BJ (cell line): ENCODE measurements at regions of chr17 and their contacts with region 1.

Region 1: GRCh38 chr17:9792181-9792840 is 919 bp upstream of the DHRS7C start:
- DNase-seq: no peak
- H3K4me3 ChIP-seq: no peak overlapping the region
- H3K27me3 ChIP-seq: no peaks in the 10 kb centered on the region; the same call in 1 of the 2 replicates
- CTCF ChIP-seq: no peak

Region 2: DNA sequence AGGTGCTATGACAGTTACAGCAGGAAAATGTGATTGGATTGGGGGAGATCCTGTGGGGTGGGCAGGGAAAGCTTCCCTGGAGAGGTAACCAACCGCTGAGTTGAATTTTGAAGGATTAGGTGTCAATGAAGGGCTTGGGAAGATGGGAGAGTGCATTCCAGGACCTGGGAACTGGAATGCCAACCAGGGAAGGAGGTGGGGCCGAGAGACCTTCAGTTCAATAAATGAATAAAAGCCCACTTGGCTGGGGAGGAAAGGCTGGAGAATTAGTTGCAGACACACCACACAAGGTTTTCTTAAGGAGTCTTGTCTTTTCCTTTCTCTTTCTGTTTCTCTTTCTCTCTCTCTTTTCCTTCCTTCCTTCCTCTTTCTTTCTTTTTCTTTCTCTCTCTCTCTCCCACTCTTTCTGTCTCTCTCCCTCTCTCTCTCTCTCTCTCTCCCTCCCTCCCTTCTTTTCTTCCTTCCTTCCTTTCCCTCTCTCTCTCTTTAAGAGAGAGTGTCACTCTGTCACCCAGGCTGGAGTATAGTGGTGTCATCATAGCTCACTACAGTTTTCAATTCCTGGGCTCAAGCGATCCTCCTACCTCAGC is 143.7 kb before region 1 on chr17:
- CTCF ChIA-PET with region 1: no interaction called
- POLR2A ChIA-PET with region 1: interaction called, 12 read pairs
- DNase-seq: no peak
- H3K4me3 ChIP-seq: no peak overlapping the region
- H3K27me3 ChIP-seq: no peaks in the 10 kb centered on the region; the same call in 1 of the 2 replicates
- CTCF ChIP-seq: no peak

Region 3: DNA sequence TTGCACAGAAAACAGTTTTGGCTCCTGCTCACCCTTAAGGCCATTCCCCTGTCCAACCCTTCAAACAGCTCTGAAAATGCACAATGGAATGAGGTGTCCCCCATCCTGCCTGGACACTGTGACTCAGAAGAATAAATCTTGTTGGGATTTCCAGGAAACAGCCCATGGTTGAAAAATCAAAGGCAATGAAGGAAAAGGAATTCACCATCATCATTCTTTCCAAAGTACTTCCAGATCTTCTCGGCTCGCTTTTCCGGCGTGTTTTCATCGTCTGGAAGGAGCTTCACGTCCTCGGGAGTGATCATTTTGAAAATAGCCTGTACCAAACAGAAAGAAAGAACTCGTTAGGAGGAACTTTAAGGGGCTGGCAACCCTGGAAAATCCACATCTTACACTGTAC is 108.5 kb after region 1 on chr17:
- CTCF ChIA-PET with region 1: no interaction called
- POLR2A ChIA-PET with region 1: no interaction called
- DNase-seq: no peak
- H3K4me3 ChIP-seq: no peak overlapping the region
- H3K27me3 ChIP-seq: no peaks in the 10 kb centered on the region; the same call in 1 of the 2 replicates
- CTCF ChIP-seq: no peak

Region 4: DNA sequence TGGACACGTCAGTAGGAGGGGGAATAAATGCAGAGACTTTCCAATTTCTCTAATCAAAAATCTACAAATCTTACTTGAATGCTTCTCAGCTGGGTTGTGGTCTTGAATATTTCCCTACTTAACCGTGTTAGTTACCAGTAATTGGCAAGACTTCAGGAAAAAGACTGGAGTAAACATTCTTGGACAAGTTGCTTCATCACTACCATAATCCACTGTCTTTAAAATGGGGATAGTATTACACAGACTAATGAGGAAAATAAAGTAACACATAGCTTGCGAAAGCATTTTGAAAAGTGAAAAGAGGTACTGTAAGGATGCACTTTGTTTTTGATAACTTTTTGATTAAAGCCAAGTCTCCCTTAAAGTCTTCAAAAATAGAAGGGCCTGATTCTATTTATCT is 707.6 kb after region 1 on chr17:
- CTCF ChIA-PET with region 1: no interaction called
- POLR2A ChIA-PET with region 1: no interaction called
- DNase-seq: no peak
- H3K4me3 ChIP-seq: no peak overlapping the region
- H3K27me3 ChIP-seq: no peaks in the 10 kb centered on the region
- CTCF ChIP-seq: no peak